CD8-positive, alpha-beta memory T cell (primary cell): ENCODE measurements at regions of chr2 and their contacts with region 1.

Region 1: DNA sequence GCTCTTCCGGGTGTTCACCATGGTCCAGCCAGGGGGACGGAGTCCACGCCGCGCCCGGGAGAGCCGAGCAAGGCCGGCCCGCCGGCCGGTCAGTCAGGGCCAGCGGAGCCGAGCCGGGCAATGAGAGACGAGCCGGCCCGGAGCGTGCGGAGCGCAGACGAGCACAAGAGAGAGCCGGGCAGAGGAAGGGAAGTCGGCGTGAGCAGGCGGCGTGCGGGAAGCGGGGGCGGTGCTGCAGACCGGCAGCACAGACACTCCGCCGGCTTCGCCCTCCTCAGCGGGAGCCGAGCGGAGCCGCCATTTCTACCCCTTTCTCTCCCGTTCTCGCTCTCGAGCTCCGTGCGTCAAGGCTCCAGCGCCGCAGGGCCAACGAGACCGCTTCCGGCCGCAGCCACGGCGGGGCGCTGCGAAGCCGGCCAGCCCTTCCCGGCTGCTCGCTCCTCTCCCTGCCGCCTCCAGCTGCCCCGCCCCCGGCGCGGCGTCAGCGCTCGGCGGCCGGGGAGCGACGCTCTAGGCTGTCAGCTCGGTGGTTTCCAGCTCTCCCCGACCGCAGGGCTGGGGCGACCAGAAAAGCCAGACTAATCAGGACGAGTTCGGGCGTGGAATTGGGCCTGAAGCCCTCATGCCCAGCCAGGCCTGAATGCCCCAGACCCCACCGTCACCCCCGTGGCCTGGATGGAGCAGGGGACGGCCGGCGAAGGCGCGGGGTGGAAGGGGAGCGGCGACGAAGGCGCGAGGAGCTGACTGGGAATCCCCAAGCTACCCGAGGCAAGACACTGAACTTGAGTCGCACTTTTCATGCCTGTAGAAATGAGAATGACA is at the start of gene ATAD2B:
- DNase-seq: peak; percentile 90 to 97 (median 94)
- H3K4me3 ChIP-seq: peak within 1 kb of the TSS; percentile 81
- H3K4me3 Mint-ChIP-seq: peak within 1 kb of the TSS; percentile 97 to 99 (median 98)
- H3K27ac ChIP-seq: peak within 1 kb of the TSS; percentile 98
- H3K27ac Mint-ChIP-seq: peak within 1 kb of the TSS; percentile 99 to 100 (median 100)
- H3K4me1 ChIP-seq: peaks cover 39% of the 10 kb centered on the region
- H3K4me1 Mint-ChIP-seq: peaks cover 45 to 66% (median 48%) of the 10 kb centered on the region in 3 donors
- H3K27me3 ChIP-seq: no peaks in the 10 kb centered on the region
- H3K27me3 Mint-ChIP-seq: no peaks in the 10 kb centered on the region
- total RNA-seq, gene ATAD2B: 15.4 to 16.8 TPM

Region 2: GRCh38 chr2:23772684-23773083 is 154.3 kb before region 1 on chr2:
- CTCF ChIA-PET with region 1: no interaction called
- POLR2A ChIA-PET with region 1: no interaction called
- DNase-seq: no peak
- H3K4me3 ChIP-seq: no peak overlapping the region
- H3K4me3 Mint-ChIP-seq: no peak overlapping the region
- H3K27ac ChIP-seq: no peak overlapping the region
- H3K27ac Mint-ChIP-seq: peak overlapping the region in 1 of 8 donors; percentile 13
- H3K4me1 ChIP-seq: no peaks in the 10 kb centered on the region
- H3K4me1 Mint-ChIP-seq: no peaks in the 10 kb centered on the region
- H3K27me3 ChIP-seq: no peaks in the 10 kb centered on the region
- H3K27me3 Mint-ChIP-seq: no peaks in the 10 kb centered on the region

Region 3: GRCh38 chr2:23824777-23825212 is 102.2 kb before region 1 on chr2:
- CTCF ChIA-PET with region 1: interaction called, 24 read pairs
- POLR2A ChIA-PET with region 1: interaction called, 3 read pairs
- DNase-seq: peak in 2 of 5 donors; percentile 26 to 44
- H3K4me3 ChIP-seq: no peak overlapping the region
- H3K4me3 Mint-ChIP-seq: no peak overlapping the region
- H3K27ac ChIP-seq: no peak overlapping the region
- H3K27ac Mint-ChIP-seq: peak overlapping the region in 2 of 8 donors; percentile 16 to 71
- H3K4me1 ChIP-seq: no peaks in the 10 kb centered on the region
- H3K4me1 Mint-ChIP-seq: peaks cover 0 to 3% (median 0%) of the 10 kb centered on the region in 3 donors
- H3K27me3 ChIP-seq: no peaks in the 10 kb centered on the region
- H3K27me3 Mint-ChIP-seq: no peaks in the 10 kb centered on the region

Region 4: DNA sequence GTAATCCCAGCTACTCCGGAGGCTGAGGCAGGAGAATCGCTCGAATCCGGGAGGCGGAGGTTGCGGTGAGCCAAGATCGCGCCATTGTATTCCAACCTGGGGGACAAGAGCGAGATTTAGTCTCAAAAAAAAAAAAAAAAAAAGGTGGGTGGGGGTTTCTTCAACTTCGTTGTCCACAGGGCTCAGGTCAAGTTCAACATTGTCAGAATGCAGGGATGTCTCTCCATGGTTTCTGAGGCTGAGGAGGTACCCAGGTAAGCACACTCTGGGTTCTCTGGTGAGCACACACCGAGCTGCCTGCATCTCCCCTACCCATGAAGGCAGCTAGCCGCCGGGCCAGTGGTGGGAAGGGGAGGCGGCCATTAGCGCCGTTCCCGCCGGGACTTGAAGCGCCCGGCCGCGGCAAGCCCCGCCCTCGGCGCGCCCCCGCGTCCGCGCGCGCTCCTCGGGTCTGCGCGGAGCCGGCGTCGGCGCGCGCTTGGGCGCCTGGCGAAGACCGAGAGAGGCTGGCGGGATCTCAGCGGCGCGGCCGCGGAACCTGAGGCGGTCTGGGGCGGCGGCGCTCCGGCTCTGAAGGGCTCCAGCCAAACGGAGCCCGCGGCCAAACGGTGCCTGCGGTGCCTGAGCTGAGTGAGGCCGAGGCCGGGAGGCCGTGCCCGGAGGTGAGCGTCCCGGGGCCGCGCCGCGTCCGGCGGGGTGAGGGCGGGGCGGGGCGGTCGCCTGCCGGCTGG is 13.2 kb after region 1 on chr2 and contains the start of gene UBXN2A:
- CTCF ChIA-PET with region 1: interaction called, 81 read pairs
- POLR2A ChIA-PET with region 1: interaction called, 69 read pairs
- DNase-seq: peak; percentile 68 to 81 (median 78)
- H3K4me3 ChIP-seq: peak within 1 kb of the TSS; percentile 83
- H3K4me3 Mint-ChIP-seq: peak within 1 kb of the TSS; percentile 88 to 99 (median 95)
- H3K27ac ChIP-seq: peak within 1 kb of the TSS; percentile 75
- H3K27ac Mint-ChIP-seq: peak within 1 kb of the TSS; percentile 80 to 97 (median 93)
- H3K4me1 ChIP-seq: peaks cover 12% of the 10 kb centered on the region
- H3K4me1 Mint-ChIP-seq: peaks cover 23 to 41% (median 31%) of the 10 kb centered on the region in 3 donors
- H3K27me3 ChIP-seq: no peaks in the 10 kb centered on the region
- H3K27me3 Mint-ChIP-seq: peaks cover 0 to 1% of the 10 kb centered on the region in 2 donors
- total RNA-seq, gene UBXN2A: 13.3 to 13.9 TPM

Region 5: DNA sequence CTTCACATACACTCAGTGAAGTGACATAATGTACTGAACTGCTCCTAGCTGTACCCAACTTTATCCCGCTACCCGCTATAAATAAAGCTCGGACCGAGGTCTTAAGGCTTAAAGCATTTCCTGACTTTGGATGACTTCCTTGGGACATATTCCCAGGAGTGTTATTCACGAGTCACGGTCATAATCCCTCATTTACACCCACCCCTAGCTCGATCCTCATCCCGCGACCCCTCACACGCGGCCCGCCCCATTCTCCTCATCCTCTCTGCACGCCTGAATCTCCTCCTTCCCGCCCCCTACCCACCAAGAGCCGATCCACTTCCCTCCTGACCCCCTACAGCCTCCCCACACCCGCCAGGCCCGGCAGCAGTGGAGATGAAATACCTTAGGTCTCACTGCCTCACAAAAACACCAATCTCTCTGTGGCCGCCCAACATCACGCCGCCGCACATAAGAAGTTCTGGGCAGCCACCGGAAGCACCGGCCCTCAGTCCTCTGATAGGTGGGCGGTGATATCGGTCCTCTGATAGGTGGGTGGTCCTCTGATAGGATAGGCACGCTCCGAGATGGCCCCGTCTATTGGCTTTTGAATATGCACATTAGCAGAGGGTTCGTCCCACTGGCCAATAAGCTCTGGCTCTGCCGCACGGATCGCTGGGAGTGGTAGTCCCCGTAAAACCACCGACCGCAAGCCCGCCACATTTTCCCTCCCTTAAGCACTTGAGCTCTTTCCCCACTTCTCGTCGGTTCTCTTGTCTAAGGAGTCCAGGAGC is 120.2 kb after region 1 on chr2 and contains the start of gene WDCP:
- CTCF ChIA-PET with region 1: interaction called, 16 read pairs
- POLR2A ChIA-PET with region 1: interaction called, 23 read pairs
- DNase-seq: peak; percentile 90 to 96 (median 94)
- H3K4me3 ChIP-seq: peak within 1 kb of the TSS; percentile 70
- H3K4me3 Mint-ChIP-seq: peak within 1 kb of the TSS; percentile 87 to 98 (median 93)
- H3K27ac ChIP-seq: peak within 1 kb of the TSS; percentile 36
- H3K27ac Mint-ChIP-seq: peak within 1 kb of the TSS; percentile 31 to 97 (median 93)
- H3K4me1 ChIP-seq: peaks cover 22% of the 10 kb centered on the region
- H3K4me1 Mint-ChIP-seq: peaks cover 28 to 42% (median 40%) of the 10 kb centered on the region in 3 donors
- H3K27me3 ChIP-seq: peaks cover 7% of the 10 kb centered on the region
- H3K27me3 Mint-ChIP-seq: no peaks in the 10 kb centered on the region
- total RNA-seq, gene WDCP: 29.4 to 31.9 TPM

Region 6: DNA sequence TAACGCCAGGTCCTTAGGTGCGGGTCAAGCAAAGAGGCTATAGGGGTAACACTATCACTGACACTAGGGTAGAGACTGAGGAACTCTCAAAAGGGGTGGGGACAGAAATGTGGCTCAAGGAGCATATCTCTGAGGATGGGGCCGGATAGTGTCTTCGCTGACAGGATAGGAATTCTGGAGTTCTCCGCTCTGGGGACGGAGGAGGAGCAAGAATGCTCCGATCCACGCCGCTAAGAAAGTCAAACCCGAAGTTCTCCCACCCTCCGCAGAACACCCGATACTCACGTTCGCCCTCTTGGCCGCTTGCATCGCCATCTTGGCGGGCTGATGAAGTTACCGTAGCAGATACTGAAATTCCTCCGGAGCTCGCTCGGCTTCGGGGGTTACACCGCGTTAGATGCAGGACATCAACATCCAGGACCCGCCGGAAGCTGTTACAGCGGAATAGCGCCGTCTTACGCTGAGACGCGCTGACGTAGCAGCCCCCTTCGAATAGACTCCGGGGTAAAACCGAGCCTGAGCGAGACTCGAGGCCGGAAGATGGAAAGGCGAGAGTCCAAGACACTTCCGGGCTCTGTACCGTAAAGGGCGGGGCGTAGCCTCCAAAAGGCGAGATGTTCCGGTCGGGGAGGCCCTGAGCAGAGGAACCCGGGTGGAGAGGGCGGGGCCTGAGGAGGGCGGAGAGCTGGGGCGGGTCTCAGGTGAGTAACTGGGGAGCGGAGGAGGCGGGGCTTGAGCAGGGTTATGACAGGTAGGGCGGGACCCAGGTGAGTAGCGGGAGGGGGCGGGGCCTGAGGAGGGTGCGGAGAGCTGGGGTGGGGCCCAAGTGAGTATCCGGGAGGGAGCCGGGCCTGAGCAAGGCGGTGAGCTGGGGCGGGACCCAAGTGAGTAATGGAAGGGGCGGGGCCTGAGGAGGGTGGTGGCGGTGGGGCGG is 149.2 kb after region 1 on chr2 and contains the start of gene SF3B6:
- CTCF ChIA-PET with region 1: interaction called, 48 read pairs
- POLR2A ChIA-PET with region 1: interaction called, 41 read pairs
- DNase-seq: peak; percentile 99 to 100 (median 100)
- H3K4me3 ChIP-seq: peak within 1 kb of the TSS; percentile 98
- H3K4me3 Mint-ChIP-seq: peak within 1 kb of the TSS; percentile 94 to 100 (median 99)
- H3K27ac ChIP-seq: peak within 1 kb of the TSS; percentile 93
- H3K27ac Mint-ChIP-seq: peak within 1 kb of the TSS; percentile 91 to 100 (median 98)
- H3K4me1 ChIP-seq: peaks cover 23% of the 10 kb centered on the region
- H3K4me1 Mint-ChIP-seq: peaks cover 29 to 48% (median 42%) of the 10 kb centered on the region in 3 donors
- H3K27me3 ChIP-seq: no peaks in the 10 kb centered on the region
- H3K27me3 Mint-ChIP-seq: no peaks in the 10 kb centered on the region
- total RNA-seq, gene SF3B6: 141 to 146 TPM

Region 7: GRCh38 chr2:24084386-24085361 is 157.7 kb after region 1 on chr2 and contains the start of gene TP53I3:
- CTCF ChIA-PET with region 1: interaction called, 48 read pairs
- POLR2A ChIA-PET with region 1: interaction called, 20 read pairs
- DNase-seq: peak; percentile 76 to 83 (median 80)
- H3K4me3 ChIP-seq: peak within 1 kb of the TSS; percentile 67
- H3K4me3 Mint-ChIP-seq: peak within 1 kb of the TSS; percentile 72 to 88 (median 83)
- H3K27ac ChIP-seq: peak within 1 kb of the TSS; percentile 34
- H3K27ac Mint-ChIP-seq: peak within 1 kb of the TSS; percentile 18 to 88 (median 74)
- H3K4me1 ChIP-seq: peaks cover 14% of the 10 kb centered on the region
- H3K4me1 Mint-ChIP-seq: peaks cover 8 to 20% (median 18%) of the 10 kb centered on the region in 3 donors
- H3K27me3 ChIP-seq: no peaks in the 10 kb centered on the region
- H3K27me3 Mint-ChIP-seq: no peaks in the 10 kb centered on the region
- total RNA-seq, gene TP53I3: 3.9 to 4.3 TPM